ENCODE measurements at regions of chr14 and their contacts with region 1.

Region 1: DNA sequence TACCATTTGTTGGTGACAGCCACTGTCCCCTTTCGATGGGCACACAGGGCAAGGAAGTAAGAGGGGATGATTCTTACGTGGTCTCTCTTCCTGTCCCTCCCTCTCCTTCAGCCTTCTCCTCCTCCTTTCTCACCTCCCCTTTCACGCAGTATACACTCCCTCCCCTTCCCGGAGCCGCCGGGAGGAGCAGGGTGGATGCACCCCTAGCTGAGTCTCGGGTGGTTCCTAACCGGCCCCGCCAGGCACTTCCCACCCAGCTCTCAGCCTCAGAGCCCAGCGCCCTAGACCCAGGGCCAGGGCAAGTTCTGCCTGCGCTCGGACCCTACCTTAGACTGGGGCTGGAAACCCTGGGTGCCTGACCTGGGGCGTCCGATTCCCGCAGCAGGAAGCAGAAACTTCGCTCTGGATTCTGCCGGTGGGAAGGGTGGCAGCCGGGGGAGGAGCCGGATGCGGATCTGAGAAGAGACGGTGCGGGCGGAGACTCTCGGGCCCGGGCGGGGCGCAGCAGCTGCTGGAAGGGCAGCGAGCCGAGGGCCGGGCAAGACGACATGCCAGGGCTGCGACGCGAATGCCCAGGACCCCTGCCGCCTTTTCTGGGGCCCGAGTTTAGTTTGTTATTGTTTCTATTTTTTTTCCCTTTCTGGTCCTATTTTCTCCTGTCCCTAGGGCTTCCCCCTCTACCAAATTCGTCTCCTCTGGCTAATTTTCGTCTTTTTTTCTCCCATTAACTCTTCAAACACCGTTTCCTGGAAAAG is at the start of gene TEP1:
- DNase-seq: peak; percentile 78
- ATAC-seq: peak; percentile 79
- H3K4me3 ChIP-seq: peak within 1 kb of the TSS; percentile 77 to 97 (median 93)
- H3K4me3 Mint-ChIP-seq: peak within 1 kb of the TSS; percentile 100
- H3K27ac ChIP-seq: peak within 1 kb of the TSS; percentile 90 to 92
- H3K27ac Mint-ChIP-seq: peak within 1 kb of the TSS; percentile 100
- H3K4me1 ChIP-seq: peaks cover 31 to 35% of the 10 kb centered on the region in 2 donors
- H3K4me1 Mint-ChIP-seq: peaks cover 48% of the 10 kb centered on the region
- H3K27me3 ChIP-seq: no peaks in the 10 kb centered on the region
- H3K27me3 Mint-ChIP-seq: no peaks in the 10 kb centered on the region
- CTCF ChIP-seq: no peak
- total RNA-seq, gene TEP1: 123 and 143 TPM in 2 replicates

Region 2: DNA sequence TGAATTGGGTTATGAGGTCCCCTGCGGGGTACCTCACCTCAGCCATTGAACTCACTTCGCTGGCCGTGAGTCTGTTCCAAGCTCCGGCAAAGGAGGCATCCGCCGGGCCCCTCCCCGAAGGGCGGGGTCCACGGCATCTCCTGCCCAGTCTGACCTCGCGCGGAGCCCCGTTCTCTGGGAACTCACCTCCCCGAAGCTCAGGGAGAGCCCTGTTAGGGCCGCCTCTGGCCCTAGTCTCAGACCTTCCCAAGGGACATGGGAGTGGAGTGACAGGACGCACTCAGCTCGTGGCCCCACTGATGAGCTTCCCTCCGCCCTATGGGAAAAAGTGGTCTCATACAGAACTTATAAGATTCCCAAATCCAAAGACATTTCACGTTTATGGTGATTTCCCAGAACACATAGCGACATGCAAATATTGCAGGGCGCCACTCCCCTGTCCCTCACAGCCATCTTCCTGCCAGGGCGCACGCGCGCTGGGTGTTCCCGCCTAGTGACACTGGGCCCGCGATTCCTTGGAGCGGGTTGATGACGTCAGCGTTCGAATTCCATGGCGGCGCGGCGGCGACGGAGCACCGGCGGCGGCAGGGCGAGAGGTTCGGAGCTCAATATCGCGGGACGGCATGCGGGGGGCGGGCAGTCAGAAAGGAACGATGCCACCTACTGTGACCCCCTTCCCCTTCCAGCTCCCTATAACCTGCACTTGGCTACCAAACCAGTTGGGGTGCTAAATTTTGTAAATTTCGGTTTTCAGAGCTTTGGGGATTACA is 69.9 kb before region 1 on chr14 and contains the start of gene PARP2:
- CTCF ChIA-PET with region 1: interaction called, 5 read pairs
- POLR2A ChIA-PET with region 1: interaction called, 13 read pairs
- intact Hi-C with region 1: loop called (anchors 1 kb)
- DNase-seq: peak; percentile 97
- ATAC-seq: peak; percentile 81
- H3K4me3 ChIP-seq: peak within 1 kb of the TSS; percentile 79 to 96 (median 88)
- H3K4me3 Mint-ChIP-seq: peak within 1 kb of the TSS; percentile 97
- H3K27ac ChIP-seq: peak within 1 kb of the TSS; percentile 85 to 93
- H3K27ac Mint-ChIP-seq: peak within 1 kb of the TSS; percentile 99
- H3K4me1 ChIP-seq: peaks cover 6 to 10% of the 10 kb centered on the region in 2 donors
- H3K4me1 Mint-ChIP-seq: peaks cover 15% of the 10 kb centered on the region
- H3K27me3 ChIP-seq: no peaks in the 10 kb centered on the region
- H3K27me3 Mint-ChIP-seq: no peaks in the 10 kb centered on the region
- CTCF ChIP-seq: peak; percentile 22
- total RNA-seq, gene PARP2: 17.4 and 22.4 TPM in 2 replicates

Region 3: DNA sequence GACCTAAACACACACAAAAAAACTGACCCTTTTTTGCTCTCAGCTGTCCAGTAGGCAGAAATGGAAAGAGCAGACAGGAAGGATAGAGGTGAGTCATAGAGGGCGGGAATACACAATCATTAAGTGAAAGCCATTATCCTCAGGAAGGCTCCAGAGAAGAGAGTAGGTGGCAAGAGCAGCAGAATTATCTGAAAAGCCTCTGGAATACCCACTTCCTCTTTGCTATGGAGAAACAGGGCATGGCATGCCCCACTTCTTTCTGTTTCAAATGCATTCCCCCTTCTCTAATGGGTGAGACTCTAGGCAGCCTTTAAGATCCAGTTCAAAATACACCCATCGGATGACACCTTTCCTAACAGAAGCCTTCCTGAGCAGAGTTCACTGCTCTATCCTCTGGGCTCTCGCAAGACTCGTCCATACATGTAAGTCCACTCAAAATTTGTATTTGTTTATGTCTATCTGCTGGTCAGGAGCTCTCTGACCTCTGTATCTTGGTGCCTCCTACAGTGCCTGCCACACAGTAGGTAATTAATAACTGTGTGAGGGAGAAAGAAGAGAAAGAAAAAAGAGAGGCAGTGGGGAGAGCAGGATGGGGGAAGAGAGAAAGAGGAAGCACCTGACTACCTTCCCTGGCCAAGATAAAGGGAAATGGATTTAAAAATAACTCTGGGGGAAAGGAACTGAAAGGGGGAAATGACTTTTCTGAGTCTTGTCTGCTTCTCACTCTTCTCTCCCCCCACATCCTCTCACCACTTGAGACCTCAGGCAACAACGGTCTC is 14.2 kb after region 1 on chr14:
- CTCF ChIA-PET with region 1: interaction called, 35 read pairs
- POLR2A ChIA-PET with region 1: interaction called, 3 read pairs
- intact Hi-C with region 1: no loop called
- DNase-seq: peak; percentile 79
- ATAC-seq: peak; percentile 76
- H3K4me3 ChIP-seq: peak overlapping the region; percentile 4 to 46 (median 29)
- H3K4me3 Mint-ChIP-seq: peak overlapping the region; percentile 83
- H3K27ac ChIP-seq: peak overlapping the region; percentile 89
- H3K27ac Mint-ChIP-seq: peak overlapping the region; percentile 98
- H3K4me1 ChIP-seq: peaks cover 41 to 49% of the 10 kb centered on the region in 2 donors
- H3K4me1 Mint-ChIP-seq: peaks cover 60% of the 10 kb centered on the region
- H3K27me3 ChIP-seq: no peaks in the 10 kb centered on the region
- H3K27me3 Mint-ChIP-seq: no peaks in the 10 kb centered on the region
- CTCF ChIP-seq: no peak

Region 4: GRCh38 chr14:20440882-20441281 is 27.7 kb after region 1 on chr14:
- CTCF ChIA-PET with region 1: interaction called, 16 read pairs
- POLR2A ChIA-PET with region 1: interaction called, 3 read pairs
- intact Hi-C with region 1: no loop called
- DNase-seq: no peak
- ATAC-seq: peak; percentile 72
- H3K4me3 ChIP-seq: no peak overlapping the region
- H3K4me3 Mint-ChIP-seq: peak overlapping the region; percentile 60
- H3K27ac ChIP-seq: peak overlapping the region; percentile 46 to 56
- H3K27ac Mint-ChIP-seq: peak overlapping the region; percentile 88
- H3K4me1 ChIP-seq: peaks cover 45 to 57% of the 10 kb centered on the region in 2 donors
- H3K4me1 Mint-ChIP-seq: peaks cover 53% of the 10 kb centered on the region
- H3K27me3 ChIP-seq: no peaks in the 10 kb centered on the region
- H3K27me3 Mint-ChIP-seq: no peaks in the 10 kb centered on the region
- CTCF ChIP-seq: no peak

Region 5: DNA sequence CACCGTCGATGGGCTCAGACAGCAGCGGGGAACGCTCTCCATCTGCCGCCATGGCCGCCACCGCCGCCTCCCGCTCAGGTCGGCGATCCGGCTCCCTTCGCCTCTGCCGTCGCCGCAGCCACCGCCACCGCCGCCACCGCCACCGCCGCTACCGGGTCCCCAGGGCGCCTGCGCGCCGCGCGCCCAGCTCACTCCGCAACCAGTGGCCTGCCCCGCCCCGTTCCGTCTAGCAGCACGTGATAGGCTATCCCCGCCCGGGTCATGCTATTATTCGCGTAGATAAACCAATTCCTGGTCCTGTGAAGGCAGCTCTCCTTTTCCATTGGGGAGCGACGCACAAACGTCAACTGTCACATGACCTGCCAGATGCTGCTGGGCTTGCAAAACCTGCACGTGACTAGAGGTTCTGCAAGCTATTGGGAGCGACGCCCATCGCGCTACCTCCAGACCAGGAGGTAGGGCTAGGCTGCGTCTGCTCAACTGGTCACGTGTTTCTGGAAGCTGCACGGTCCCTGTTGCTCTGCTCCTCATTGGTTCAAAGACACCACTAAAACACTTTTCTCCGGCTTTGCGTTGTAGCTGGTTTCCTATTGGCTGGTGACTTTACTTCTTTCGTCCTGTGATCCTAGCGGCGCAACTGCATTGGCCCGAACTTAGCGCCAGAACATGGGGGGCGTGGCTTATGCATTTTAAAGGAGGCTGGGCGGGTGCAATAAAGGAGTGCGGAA is 48.2 kb after region 1 on chr14 and contains the start of gene PIP4P1:
- CTCF ChIA-PET with region 1: interaction called, 59 read pairs
- POLR2A ChIA-PET with region 1: interaction called, 4 read pairs
- intact Hi-C with region 1: loop called (anchors 1 kb)
- DNase-seq: peak; percentile 100
- ATAC-seq: peak; percentile 84
- H3K4me3 ChIP-seq: peak within 1 kb of the TSS; percentile 75 to 90 (median 83)
- H3K4me3 Mint-ChIP-seq: peak within 1 kb of the TSS; percentile 94
- H3K27ac ChIP-seq: peak within 1 kb of the TSS; percentile 98
- H3K27ac Mint-ChIP-seq: peak within 1 kb of the TSS; percentile 98
- H3K4me1 ChIP-seq: peaks cover 33 to 59% of the 10 kb centered on the region in 2 donors
- H3K4me1 Mint-ChIP-seq: peaks cover 45% of the 10 kb centered on the region
- H3K27me3 ChIP-seq: no peaks in the 10 kb centered on the region
- H3K27me3 Mint-ChIP-seq: no peaks in the 10 kb centered on the region
- CTCF ChIP-seq: no peak
- total RNA-seq, gene PIP4P1: 97.5 and 101 TPM in 2 replicates

Region 6: GRCh38 chr14:20530771-20531571 is 117.7 kb after region 1 on chr14:
- CTCF ChIA-PET with region 1: interaction called, 20 read pairs
- POLR2A ChIA-PET with region 1: no interaction called
- intact Hi-C with region 1: loop called (anchors 1 kb)
- DNase-seq: peak; percentile 78
- ATAC-seq: peak; percentile 65
- H3K4me3 ChIP-seq: no peak overlapping the region
- H3K4me3 Mint-ChIP-seq: no peak overlapping the region
- H3K27ac ChIP-seq: no peak overlapping the region
- H3K27ac Mint-ChIP-seq: peak overlapping the region; percentile 42
- H3K4me1 ChIP-seq: peaks cover 0 to 4% of the 10 kb centered on the region in 2 donors
- H3K4me1 Mint-ChIP-seq: peaks cover 9% of the 10 kb centered on the region
- H3K27me3 ChIP-seq: no peaks in the 10 kb centered on the region
- H3K27me3 Mint-ChIP-seq: peaks cover 9% of the 10 kb centered on the region
- CTCF ChIP-seq: peak; percentile 83

Region 7: GRCh38 chr14:20690848-20691523 is 277.8 kb after region 1 on chr14:
- CTCF ChIA-PET with region 1: interaction called, 20 read pairs
- POLR2A ChIA-PET with region 1: no interaction called
- intact Hi-C with region 1: no loop called
- DNase-seq: peak; percentile 83
- ATAC-seq: peak; percentile 97
- H3K4me3 ChIP-seq: no peak overlapping the region
- H3K4me3 Mint-ChIP-seq: no peak overlapping the region
- H3K27ac ChIP-seq: no peak overlapping the region
- H3K27ac Mint-ChIP-seq: no peak overlapping the region
- H3K4me1 ChIP-seq: peaks cover 0 to 3% of the 10 kb centered on the region in 2 donors
- H3K4me1 Mint-ChIP-seq: peaks cover 5% of the 10 kb centered on the region
- H3K27me3 ChIP-seq: no peaks in the 10 kb centered on the region
- H3K27me3 Mint-ChIP-seq: no peaks in the 10 kb centered on the region
- CTCF ChIP-seq: peak; percentile 99